Activated CD8-positive, alpha-beta T cell treated with anti-CD3 and anti-CD28 coated beads for 36 hours (primary cell): ENCODE measurements at regions of chr14 and their contacts with region 1.

Region 1: GRCh38 chr14:37874429-37875191 is 279.2 kb downstream of the TTC6 start:
- DNase-seq: peak; percentile 86
- ATAC-seq: peak; percentile 86
- H3K4me3 Mint-ChIP-seq: no peak overlapping the region
- H3K27ac Mint-ChIP-seq: no peak overlapping the region
- H3K4me1 Mint-ChIP-seq: peaks cover 2% of the 10 kb centered on the region
- H3K27me3 Mint-ChIP-seq: peaks cover 1% of the 10 kb centered on the region
- CTCF ChIP-seq: peak; percentile 72

Region 2: DNA sequence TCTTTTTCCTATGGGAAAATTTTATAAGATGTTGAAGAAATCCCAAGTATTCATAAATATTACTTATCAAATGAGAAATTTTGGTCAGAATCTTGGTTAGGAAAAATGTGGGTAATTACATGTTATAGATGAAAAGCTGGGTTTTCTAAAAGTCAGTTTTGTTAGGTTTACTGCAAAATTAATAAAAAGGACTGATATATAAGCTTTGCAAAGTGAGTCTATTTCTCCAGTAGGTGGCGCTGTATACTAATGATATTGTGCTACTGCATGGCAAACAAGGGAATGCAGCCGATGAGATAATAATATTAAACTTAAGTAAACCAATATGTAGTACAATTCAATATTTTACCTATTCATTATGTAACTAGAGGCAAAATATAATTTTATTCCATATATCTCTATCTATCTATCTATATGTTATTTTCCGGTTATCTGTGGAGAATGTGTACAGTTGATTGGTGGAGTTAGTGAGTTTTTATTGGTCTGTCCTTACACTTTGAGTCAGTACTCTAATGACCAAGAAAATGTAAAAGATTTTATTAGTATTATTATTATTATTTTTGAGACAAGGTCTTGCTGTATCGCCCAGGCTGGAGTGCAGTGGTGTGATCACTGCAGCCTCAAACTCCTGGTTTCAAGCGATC is 643.9 kb before region 1 on chr14:
- CTCF ChIA-PET with region 1: interaction called, 15 read pairs
- POLR2A ChIA-PET with region 1: no interaction called
- intact Hi-C with region 1: no loop called
- DNase-seq: no peak
- ATAC-seq: no peak
- H3K4me3 Mint-ChIP-seq: no peak overlapping the region
- H3K27ac Mint-ChIP-seq: no peak overlapping the region
- H3K4me1 Mint-ChIP-seq: no peaks in the 10 kb centered on the region
- H3K27me3 Mint-ChIP-seq: peaks cover 1% of the 10 kb centered on the region
- CTCF ChIP-seq: peak; percentile 76

Region 3: DNA sequence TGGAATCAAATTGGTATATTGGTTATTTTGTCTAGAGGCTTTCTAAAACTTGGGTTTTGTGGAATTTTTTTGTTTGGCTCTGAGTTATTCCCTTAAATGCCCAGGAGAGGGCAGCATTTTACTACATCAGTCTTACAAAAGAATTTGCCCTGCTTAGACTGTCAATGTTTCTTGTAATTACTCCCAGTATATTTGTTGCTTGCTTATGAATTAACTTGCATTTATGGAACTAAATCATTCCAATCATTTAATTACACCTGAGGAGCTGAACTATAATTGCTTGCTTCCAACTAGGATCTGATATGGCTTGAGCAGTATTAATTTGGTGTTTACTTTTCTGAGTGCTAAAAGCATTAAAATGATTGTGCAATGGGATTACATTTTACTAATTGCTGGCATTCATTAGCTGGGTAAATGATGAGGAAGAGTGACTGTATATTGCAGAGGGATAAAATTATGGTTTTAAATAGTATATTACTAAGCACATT is 628.1 kb before region 1 on chr14:
- CTCF ChIA-PET with region 1: interaction called, 19 read pairs
- POLR2A ChIA-PET with region 1: no interaction called
- intact Hi-C with region 1: loop called (anchors 2 kb)
- DNase-seq: no peak
- ATAC-seq: no peak
- H3K4me3 Mint-ChIP-seq: no peak overlapping the region
- H3K27ac Mint-ChIP-seq: no peak overlapping the region
- H3K4me1 Mint-ChIP-seq: no peaks in the 10 kb centered on the region
- H3K27me3 Mint-ChIP-seq: no peaks in the 10 kb centered on the region
- CTCF ChIP-seq: peak; percentile 75

Region 4: GRCh38 chr14:37251778-37252177 is 622.8 kb before region 1 on chr14:
- CTCF ChIA-PET with region 1: interaction called, 19 read pairs
- POLR2A ChIA-PET with region 1: no interaction called
- intact Hi-C with region 1: loop called (anchors 2 kb)
- DNase-seq: no peak
- ATAC-seq: no peak
- H3K4me3 Mint-ChIP-seq: no peak overlapping the region
- H3K27ac Mint-ChIP-seq: no peak overlapping the region
- H3K4me1 Mint-ChIP-seq: no peaks in the 10 kb centered on the region
- H3K27me3 Mint-ChIP-seq: no peaks in the 10 kb centered on the region
- CTCF ChIP-seq: no peak